Mammary epithelial cell (primary cell): ENCODE measurements at regions of chr12 and their contacts with region 1.

Region 1: DNA sequence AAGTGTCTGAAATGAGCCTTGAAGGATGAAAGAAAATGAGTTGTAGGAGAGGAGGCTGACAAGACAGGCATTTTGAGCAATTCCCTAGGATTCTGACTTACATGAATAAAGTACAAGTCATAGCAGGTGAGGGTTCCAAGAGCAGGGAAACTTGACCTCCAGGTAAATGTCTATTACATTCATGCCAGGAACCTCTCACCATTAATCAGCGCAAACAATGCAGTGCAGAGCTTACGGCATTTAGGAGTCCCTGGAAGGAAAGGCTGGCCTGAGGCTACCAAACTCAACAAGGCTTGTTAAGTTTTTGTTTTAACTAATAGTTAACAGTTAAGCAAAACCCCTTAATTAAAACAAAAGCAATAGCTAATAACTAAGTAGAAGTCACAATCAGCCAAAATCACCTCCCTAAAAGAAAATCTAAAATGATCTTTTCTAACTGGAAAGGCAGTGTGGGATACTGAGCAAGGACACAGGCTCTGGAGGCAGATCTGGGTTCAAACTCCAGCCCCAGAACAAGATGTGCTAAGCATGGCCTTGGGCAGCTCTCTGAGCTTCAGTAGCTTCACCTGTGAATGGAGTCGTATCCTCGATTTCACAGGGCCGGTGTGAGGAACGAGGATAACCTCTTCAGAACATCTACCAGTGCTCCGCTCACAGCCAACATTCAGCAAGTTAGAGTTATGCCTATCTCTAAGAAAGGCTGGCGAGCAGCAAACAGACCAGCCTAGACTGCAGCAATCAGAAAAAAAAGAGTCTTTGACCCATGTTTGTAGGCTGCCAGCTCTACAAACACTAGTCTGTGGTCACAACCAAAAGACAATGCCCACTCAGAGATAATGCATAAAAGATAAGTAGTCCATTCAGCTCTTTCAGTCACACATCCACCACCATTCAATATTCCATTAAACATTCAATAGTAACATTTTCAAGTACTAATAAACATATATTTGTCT is 16.9 kb downstream of the PPTC7 start:
- DNase-seq: peak; percentile 93
- H3K4me3 ChIP-seq: peak overlapping the region in 1 of 3 experiments; percentile 8
- H3K27ac ChIP-seq: peak overlapping the region; percentile 83
- H3K4me1 ChIP-seq: peaks cover 42% of the 10 kb centered on the region
- H3K27me3 ChIP-seq: no peaks in the 10 kb centered on the region
- CTCF ChIP-seq: no peak

Region 2: GRCh38 chr12:110577717-110578521 is 11.7 kb after region 1 on chr12:
- CTCF ChIA-PET with region 1: no interaction called
- dilution Hi-C with region 1: no loop called
- in situ Hi-C with region 1: no loop called
- intact Hi-C with region 1: loop called (anchors 1 kb)
- DNase-seq: peak; percentile 99
- H3K4me3 ChIP-seq: peak overlapping the region; percentile 13 to 41 (median 32)
- H3K27ac ChIP-seq: peak overlapping the region; percentile 100
- H3K4me1 ChIP-seq: peaks cover 45% of the 10 kb centered on the region
- H3K27me3 ChIP-seq: no peaks in the 10 kb centered on the region
- CTCF ChIP-seq: no peak

Region 3: GRCh38 chr12:110717037-110717436 is 150.8 kb after region 1 on chr12:
- CTCF ChIA-PET with region 1: no interaction called
- dilution Hi-C with region 1: no loop called
- in situ Hi-C with region 1: no loop called
- intact Hi-C with region 1: no loop called
- DNase-seq: no peak
- H3K4me3 ChIP-seq: no peak overlapping the region
- H3K27ac ChIP-seq: no peak overlapping the region
- H3K4me1 ChIP-seq: no peaks in the 10 kb centered on the region
- H3K27me3 ChIP-seq: no peaks in the 10 kb centered on the region
- CTCF ChIP-seq: no peak

Region 4: GRCh38 chr12:111093428-111094142 is 527.4 kb after region 1 on chr12:
- CTCF ChIA-PET with region 1: no interaction called
- dilution Hi-C with region 1: no loop called
- in situ Hi-C with region 1: no loop called
- intact Hi-C with region 1: no loop called
- DNase-seq: no peak
- H3K4me3 ChIP-seq: no peak overlapping the region
- H3K27ac ChIP-seq: no peak overlapping the region
- H3K4me1 ChIP-seq: no peaks in the 10 kb centered on the region
- H3K27me3 ChIP-seq: peaks cover 6% of the 10 kb centered on the region
- CTCF ChIP-seq: no peak